HEK293 (cell line): ENCODE measurements at regions of chr14 and their contacts with region 1.

Region 1: DNA sequence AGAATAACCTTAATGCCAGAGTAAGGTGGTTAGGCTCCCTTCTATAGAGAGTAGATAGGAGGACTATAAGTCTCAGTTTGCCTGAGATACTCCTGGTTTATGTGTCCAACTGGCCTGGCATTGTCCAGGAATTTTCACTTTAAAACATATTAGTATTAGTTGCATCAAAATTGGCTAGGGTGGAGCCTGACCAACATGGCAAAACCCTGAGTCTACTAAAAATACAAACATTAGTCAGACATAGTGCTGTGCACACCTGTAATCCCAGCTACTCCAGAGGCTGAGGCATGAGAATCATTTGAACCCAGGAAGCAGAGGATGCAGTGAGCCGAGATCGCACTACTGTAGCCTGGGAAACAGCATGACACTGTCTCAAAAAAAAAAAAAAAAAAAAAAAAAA is 11.9 kb downstream of the WDHD1 start:
- H3K4me3 ChIP-seq: no peak overlapping the region
- H3K27ac ChIP-seq: no peak overlapping the region
- H3K4me1 ChIP-seq: no peaks in the 10 kb centered on the region
- CTCF ChIP-seq: no peak

Region 2: DNA sequence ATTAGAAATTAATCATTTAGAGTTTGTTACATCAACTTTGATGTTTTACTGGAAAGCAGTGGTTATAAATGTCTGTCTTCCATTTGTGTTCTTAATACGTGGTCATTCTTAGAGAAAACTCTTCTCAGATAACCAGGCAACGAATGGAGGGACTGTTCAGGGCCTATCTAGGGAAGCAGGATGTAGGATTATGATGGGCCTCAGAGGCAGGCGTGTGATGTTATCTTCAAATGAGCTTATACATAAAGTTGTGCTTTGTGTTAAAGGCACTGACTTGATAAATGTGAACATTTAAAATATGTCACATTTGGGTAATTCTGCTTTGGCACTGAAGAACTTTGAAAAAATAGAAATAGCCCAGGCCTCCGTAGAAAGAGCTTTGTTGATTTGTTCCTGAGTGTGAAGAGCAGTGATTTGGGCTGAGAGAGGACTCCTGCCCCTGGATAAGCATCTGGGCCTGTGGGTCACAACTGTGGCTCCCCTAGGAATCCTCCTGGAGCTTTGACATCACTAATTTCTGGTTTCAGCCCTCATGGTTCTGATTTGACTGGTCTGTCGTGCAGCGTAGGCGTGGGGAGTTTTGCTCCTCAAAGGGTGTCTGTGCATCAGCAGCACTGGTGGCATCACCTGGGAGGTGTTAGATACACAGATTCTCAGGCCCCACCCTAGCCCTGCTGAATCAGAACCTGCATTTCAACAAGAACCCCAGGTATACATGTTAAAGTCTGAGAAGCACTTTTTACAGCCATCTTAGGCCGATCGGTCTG is 392.6 kb before region 1 on chr14:
- CTCF ChIA-PET with region 1: no interaction called
- POLR2A ChIA-PET with region 1: no interaction called
- H3K4me3 ChIP-seq: no peak overlapping the region
- H3K27ac ChIP-seq: no peak overlapping the region
- H3K4me1 ChIP-seq: peaks cover 5% of the 10 kb centered on the region
- CTCF ChIP-seq: no peak

Region 3: DNA sequence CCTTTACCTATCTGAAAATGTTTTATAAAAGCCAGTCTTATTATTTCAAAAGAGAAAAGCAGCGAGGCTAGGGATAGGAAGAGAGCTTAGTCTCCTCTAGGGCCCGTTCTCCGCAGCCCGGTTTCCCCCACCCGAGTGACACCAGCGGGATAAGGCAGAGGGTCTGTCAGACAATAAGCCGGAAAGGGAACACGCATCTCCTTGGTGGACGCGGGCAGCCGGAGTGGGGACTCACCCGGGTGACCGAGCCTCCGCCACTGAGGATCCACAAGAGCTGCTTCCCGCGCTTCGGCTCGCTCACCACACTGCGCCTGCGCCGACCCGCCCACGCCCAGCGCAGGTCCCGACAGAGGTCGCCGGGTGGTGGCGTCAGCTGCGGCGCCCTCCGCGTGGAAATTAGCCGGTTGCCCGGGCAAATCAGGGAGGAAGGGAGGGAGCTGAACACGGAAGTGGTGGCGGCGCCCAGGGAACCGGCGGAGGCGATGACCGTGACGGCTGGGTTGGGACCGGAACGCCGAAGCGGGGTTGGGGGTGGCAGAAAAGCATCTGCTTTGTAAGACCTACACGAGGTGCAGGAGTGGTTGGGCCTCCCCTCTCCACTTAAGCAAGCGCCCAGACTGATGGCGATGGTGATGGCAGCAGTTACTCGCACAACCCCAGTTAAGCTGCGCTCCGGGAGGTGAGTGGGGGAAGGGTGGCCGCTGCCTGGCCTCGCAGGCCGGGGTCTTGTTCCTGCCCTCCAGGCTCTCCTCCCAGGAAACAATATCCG is 12.0 kb after region 1 on chr14 and contains the starts of genes SOCS4 and WDHD1:
- CTCF ChIA-PET with region 1: interaction called, 3 read pairs
- POLR2A ChIA-PET with region 1: interaction called, 11 read pairs
- H3K4me3 ChIP-seq: peak within 1 kb of the TSS; percentile 99
- H3K27ac ChIP-seq: peak within 1 kb of the TSS; percentile 89
- H3K4me1 ChIP-seq: peaks cover 25% of the 10 kb centered on the region
- CTCF ChIP-seq: peak; percentile 85